ENCODE measurements at regions of chr7 and their contacts with region 1.

Region 1: GRCh38 chr7:150514748-150515222 is at the start of gene GIMAP7:
- DNase-seq: peak; percentile 69
- ATAC-seq: peak; percentile 73
- H3K4me3 Mint-ChIP-seq: peak within 1 kb of the TSS; percentile 100
- H3K27ac Mint-ChIP-seq: peak within 1 kb of the TSS; percentile 100
- H3K4me1 Mint-ChIP-seq: peaks cover 41% of the 10 kb centered on the region
- H3K27me3 Mint-ChIP-seq: no peaks in the 10 kb centered on the region
- total RNA-seq, gene GIMAP7: 203 to 212 TPM

Region 2: DNA sequence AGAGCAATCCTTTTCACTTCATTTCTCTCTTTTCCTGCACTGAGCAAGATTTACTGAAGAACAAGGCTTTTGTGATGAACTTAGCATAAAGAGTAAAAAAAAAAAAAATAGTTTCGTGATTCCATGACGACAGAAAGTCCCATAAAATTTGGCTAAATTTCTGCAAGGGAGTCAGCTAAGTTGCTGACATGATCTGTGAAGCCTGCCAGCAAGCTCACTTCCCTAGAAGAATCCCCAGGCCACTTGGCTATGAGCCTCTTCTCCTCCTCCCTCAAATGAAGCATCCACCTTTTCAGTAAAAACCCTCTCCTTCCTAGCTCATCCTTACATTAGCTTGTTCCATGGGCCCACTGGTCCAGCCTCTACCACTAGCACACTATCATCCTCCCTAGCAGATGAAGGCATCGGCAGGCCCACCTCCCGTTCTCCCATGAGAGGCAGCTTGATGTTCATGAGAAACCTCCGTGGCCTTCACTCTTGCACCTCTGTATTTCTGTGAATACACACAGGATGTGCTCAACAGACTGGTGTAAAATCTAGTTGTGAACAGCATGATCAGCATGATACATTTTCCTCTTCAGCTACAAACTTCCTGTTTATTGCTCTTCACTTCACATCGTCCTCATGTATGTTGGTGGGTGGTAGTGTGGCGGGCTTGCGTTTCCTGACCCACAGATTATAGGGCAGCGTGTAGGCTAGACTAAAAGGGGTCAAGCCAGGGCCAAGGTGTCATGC is 33.4 kb before region 1 on chr7:
- POLR2A ChIA-PET with region 1: interaction called, 58 read pairs
- DNase-seq: peak; percentile 65
- ATAC-seq: peak; percentile 86
- H3K4me3 Mint-ChIP-seq: peak overlapping the region; percentile 84
- H3K27ac Mint-ChIP-seq: peak overlapping the region; percentile 98
- H3K4me1 Mint-ChIP-seq: peaks cover 71% of the 10 kb centered on the region
- H3K27me3 Mint-ChIP-seq: no peaks in the 10 kb centered on the region

Region 3: GRCh38 chr7:150567169-150567568 is 52.4 kb after region 1 on chr7 and contains the start of gene GIMAP4:
- POLR2A ChIA-PET with region 1: interaction called, 103 read pairs
- DNase-seq: no peak
- ATAC-seq: peak; percentile 63
- H3K4me3 Mint-ChIP-seq: peak within 1 kb of the TSS; percentile 94
- H3K27ac Mint-ChIP-seq: peak within 1 kb of the TSS; percentile 96
- H3K4me1 Mint-ChIP-seq: peaks cover 55% of the 10 kb centered on the region
- H3K27me3 Mint-ChIP-seq: no peaks in the 10 kb centered on the region
- total RNA-seq, gene GIMAP4: 285 to 288 TPM

Region 4: DNA sequence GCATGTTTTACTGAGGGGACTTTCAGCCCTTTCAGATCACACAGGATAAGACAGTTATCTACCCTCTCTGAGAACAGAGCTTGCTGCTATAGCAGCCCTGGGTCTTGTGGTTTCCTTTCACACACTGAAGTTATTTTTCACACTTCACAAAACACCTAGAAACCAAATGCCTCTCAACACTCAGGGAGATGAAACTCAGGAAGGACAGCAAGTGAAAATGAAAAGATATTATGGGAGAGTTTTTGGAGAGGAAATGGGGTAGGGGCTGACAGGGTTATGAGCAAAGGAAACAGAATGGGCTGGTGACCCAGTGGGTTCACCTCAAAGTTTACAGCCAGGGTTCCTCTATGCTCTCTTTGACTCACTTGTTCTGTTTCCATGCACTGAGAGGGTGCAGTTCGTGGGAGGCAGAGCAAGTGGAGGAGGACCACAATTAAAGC is 153.7 kb after region 1 on chr7:
- POLR2A ChIA-PET with region 1: interaction called, 10 read pairs
- DNase-seq: peak; percentile 48
- ATAC-seq: peak; percentile 75
- H3K4me3 Mint-ChIP-seq: peak overlapping the region; percentile 75
- H3K27ac Mint-ChIP-seq: peak overlapping the region; percentile 89
- H3K4me1 Mint-ChIP-seq: peaks cover 70% of the 10 kb centered on the region
- H3K27me3 Mint-ChIP-seq: no peaks in the 10 kb centered on the region

Region 5: DNA sequence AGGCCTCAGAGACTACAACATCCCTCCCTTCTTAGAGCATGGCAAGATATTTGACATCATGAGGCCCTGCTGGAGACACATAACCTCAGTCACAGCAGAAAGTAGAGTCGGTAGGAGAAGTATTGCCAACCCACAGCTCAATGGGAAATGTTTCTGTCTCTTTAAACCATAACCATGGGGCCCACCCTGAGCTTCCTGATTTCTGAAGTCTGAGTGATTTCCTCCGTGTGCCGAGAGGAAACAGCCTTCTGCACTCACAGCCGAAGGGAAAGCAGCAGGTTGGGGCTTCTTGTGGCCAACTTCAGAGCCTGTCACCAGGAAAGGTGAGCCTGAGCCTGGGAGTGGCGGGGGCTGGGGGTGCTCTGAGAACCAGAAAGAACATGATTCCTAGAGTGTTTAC is 201.6 kb after region 1 on chr7 and contains the start of gene GIMAP1:
- POLR2A ChIA-PET with region 1: interaction called, 21 read pairs
- DNase-seq: no peak
- ATAC-seq: peak; percentile 76
- H3K4me3 Mint-ChIP-seq: peak within 1 kb of the TSS; percentile 84
- H3K27ac Mint-ChIP-seq: peak within 1 kb of the TSS; percentile 87
- H3K4me1 Mint-ChIP-seq: peaks cover 43% of the 10 kb centered on the region
- H3K27me3 Mint-ChIP-seq: no peaks in the 10 kb centered on the region
- total RNA-seq, gene GIMAP1: 42.1 to 43.0 TPM

Region 6: GRCh38 chr7:150753826-150754603 is 239.2 kb after region 1 on chr7:
- POLR2A ChIA-PET with region 1: interaction called, 38 read pairs
- DNase-seq: no peak
- ATAC-seq: peak; percentile 23
- H3K4me3 Mint-ChIP-seq: peak overlapping the region; percentile 55
- H3K27ac Mint-ChIP-seq: peak overlapping the region; percentile 92
- H3K4me1 Mint-ChIP-seq: peaks cover 55% of the 10 kb centered on the region
- H3K27me3 Mint-ChIP-seq: peaks cover 2% of the 10 kb centered on the region